Naive thymus-derived CD4-positive, alpha-beta T cell (primary cell): ENCODE measurements at regions of chr13 and their contacts with region 1.

Region 1: DNA sequence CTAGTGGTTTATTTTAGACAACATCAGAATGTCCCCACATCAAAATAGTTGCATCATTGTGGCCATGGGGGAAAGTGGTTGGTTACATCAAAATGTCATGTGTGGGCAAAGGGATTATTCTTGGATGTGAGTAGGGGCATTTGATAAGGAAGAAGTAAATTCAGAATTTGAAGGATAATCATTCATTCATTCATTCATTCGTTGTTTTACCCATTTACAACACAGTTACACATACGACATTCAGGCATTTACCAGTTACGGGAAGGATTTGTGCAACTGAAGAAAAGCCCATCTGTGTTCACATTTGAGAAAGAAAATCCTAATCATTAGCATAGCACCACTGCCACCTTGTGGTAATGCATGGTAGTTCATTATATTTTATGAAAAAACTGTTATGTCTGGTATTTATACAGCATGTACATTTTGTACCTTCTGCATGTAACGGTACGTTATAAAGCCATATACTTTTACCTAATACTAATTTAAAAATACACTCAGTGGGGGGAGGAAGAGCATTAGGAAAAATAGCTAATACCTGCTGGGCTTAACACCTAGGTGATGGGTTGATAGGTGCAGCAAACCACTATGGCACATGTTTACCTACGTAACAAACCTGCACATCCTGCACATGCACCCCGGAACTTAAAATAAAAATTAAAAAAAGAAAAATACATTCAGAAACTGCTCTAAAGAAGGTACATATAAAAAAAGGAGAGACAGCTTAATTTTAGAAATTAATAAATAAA is 62.1 kb downstream of the DGKH start:
- DNase-seq: peak in 7 of 9 donors; percentile 30 to 78 (median 65)
- ATAC-seq: peak; percentile 90
- H3K4me3 ChIP-seq: no peak overlapping the region
- H3K4me3 Mint-ChIP-seq: no peak overlapping the region
- H3K27ac ChIP-seq: no peak overlapping the region
- H3K27ac Mint-ChIP-seq: no peak overlapping the region
- H3K4me1 ChIP-seq: no peaks in the 10 kb centered on the region
- H3K4me1 Mint-ChIP-seq: peaks cover 4 to 9% (median 7%) of the 10 kb centered on the region in 7 donors
- H3K27me3 ChIP-seq: no peaks in the 10 kb centered on the region
- H3K27me3 Mint-ChIP-seq: no peaks in the 10 kb centered on the region

Region 2: DNA sequence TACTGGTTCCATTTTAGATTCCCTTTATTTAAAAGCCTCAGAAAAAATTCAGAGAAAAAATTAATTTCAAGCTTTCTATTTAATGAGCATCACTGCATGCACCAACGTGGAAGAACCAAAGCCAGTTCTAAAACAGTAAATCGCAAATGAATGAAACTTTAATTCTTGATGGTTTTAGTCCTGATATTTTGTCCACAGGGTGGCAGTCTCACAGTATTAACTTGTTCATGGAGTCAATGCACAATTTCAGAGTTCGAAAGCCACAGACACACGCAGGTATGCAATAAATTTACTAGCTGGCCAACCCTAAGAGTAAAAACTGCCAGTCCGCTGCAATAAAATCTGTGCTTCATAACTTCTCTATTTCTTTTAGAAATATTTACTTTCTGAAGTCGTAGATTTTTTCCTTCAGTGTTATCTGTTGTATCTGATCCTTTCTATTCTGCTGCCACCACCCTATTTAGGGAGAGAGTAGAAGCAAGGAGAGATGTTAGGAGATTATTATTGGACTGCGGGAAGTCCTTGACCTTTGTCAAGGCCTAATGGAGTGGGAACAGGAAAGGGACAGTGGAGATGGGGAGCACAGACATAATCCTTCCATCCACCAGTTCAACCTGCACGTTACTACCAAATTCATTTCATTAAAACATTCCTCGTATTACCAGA is 1056.2 kb before region 1 on chr13:
- CTCF ChIA-PET with region 1: no interaction called
- POLR2A ChIA-PET with region 1: no interaction called
- intact Hi-C with region 1: loop called in 1 of 2 experiments (anchors 1 kb)
- DNase-seq: peak in 7 of 9 donors; percentile 42 to 70 (median 56)
- ATAC-seq: peak; percentile 59
- H3K4me3 ChIP-seq: no peak overlapping the region
- H3K4me3 Mint-ChIP-seq: peak overlapping the region in 7 of 10 donors; percentile 14 to 68 (median 48)
- H3K27ac ChIP-seq: peak overlapping the region; percentile 5
- H3K27ac Mint-ChIP-seq: peak overlapping the region in 7 of 9 donors; percentile 2 to 73 (median 59)
- H3K4me1 ChIP-seq: peaks cover 0 to 12% of the 10 kb centered on the region in 2 donors
- H3K4me1 Mint-ChIP-seq: peaks cover 40 to 64% (median 54%) of the 10 kb centered on the region in 7 donors
- H3K27me3 ChIP-seq: no peaks in the 10 kb centered on the region
- H3K27me3 Mint-ChIP-seq: no peaks in the 10 kb centered on the region

Region 3: DNA sequence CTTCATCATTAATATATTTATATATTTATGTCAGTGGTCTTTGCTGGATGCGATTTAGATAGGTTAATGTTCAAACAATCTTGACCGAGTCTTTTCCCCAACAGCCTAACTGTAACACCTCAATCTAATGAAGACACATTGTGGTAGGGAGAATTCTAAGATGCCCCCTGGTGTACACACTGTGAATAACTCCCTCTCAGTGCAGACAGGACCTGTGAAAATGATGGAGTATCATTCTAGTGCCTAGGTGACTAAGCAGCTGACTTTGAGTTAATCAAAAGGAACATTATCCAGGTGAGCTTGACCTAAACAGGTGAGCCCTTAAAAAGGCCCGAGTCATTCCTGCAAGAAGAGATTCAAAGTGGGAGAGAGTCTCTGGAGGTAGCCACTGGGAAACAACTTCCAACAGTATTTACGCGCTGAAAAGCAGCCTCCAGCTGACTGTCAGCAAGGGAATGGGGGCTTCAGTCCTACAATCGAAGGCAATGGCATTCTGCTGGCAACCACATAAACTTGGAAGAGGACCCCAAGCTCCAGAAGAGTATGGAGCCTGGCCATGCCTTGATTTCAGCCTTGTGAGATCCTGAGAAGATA is 888.2 kb before region 1 on chr13:
- CTCF ChIA-PET with region 1: no interaction called
- POLR2A ChIA-PET with region 1: no interaction called
- intact Hi-C with region 1: loop called in 1 of 2 experiments (anchors 1 kb)
- DNase-seq: peak in 8 of 9 donors; percentile 32 to 61 (median 53)
- ATAC-seq: peak; percentile 94
- H3K4me3 ChIP-seq: no peak overlapping the region
- H3K4me3 Mint-ChIP-seq: no peak overlapping the region
- H3K27ac ChIP-seq: no peak overlapping the region
- H3K27ac Mint-ChIP-seq: no peak overlapping the region
- H3K4me1 ChIP-seq: no peaks in the 10 kb centered on the region
- H3K4me1 Mint-ChIP-seq: peaks cover 0 to 4% (median 0%) of the 10 kb centered on the region in 7 donors
- H3K27me3 ChIP-seq: no peaks in the 10 kb centered on the region
- H3K27me3 Mint-ChIP-seq: no peaks in the 10 kb centered on the region

Region 4: DNA sequence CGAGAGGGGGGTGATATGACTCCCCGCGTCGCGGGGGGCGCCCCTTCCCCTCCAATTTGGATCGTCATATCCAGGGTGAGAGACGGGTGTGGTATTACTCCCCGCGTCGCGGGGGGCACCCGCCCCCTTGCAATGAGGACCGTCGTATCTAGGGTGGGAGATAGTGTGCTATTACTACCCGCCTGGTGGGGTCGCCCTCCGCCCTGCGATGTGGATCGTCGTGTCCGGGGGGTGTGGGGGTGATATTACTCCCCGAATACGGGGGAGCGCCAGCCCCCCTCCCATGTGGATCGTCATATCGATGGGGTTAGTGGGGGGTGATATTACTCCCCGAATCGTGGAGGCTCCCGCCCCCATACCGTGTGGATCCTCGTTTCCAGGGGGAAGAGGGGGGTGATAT is 682.4 kb before region 1 on chr13:
- CTCF ChIA-PET with region 1: no interaction called
- POLR2A ChIA-PET with region 1: no interaction called
- intact Hi-C with region 1: loop called in 1 of 2 experiments (anchors 1 kb)
- DNase-seq: peak; percentile 14 to 55 (median 38)
- ATAC-seq: peak; percentile 93
- H3K4me3 ChIP-seq: no peak overlapping the region
- H3K4me3 Mint-ChIP-seq: peak overlapping the region; percentile 13 to 86 (median 62)
- H3K27ac ChIP-seq: no peak overlapping the region
- H3K27ac Mint-ChIP-seq: peak overlapping the region in 2 of 9 donors; percentile 64 to 84
- H3K4me1 ChIP-seq: peaks cover 0 to 6% of the 10 kb centered on the region in 2 donors
- H3K4me1 Mint-ChIP-seq: peaks cover 4 to 15% (median 11%) of the 10 kb centered on the region in 7 donors
- H3K27me3 ChIP-seq: no peaks in the 10 kb centered on the region
- H3K27me3 Mint-ChIP-seq: peaks cover 0 to 7% (median 6%) of the 10 kb centered on the region in 5 donors

Region 5: DNA sequence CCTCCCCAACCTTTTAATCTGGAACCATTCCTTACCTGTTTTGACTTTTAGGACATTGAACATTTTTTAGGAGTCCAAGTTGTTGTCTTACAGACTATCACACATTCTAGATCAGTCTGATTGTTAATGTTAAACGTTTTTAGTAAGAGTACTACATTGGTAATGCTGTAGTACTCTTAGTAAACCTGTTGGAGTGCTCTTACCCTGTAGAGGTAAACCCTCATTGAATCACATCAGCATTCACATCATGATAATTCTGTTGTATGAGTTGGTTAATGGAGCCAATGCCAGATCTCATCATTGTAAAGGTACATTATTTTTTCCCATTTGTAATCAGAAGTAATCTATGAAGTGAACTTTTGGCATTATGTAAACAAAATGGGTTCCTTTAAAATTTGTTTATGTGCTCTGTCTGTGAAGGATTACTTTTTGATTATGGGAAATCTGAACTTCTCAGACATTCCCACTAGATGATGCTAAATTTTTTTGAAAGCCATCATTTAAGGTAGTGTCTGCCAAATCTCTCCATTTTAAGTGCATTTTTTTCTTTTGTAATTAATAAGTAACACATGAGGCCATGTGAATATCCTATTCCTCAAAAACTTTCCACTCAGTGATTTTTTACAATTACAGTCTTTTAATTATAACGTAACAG is 204.9 kb before region 1 on chr13:
- CTCF ChIA-PET with region 1: interaction called, 6 read pairs
- POLR2A ChIA-PET with region 1: no interaction called
- intact Hi-C with region 1: loop called (anchors 1 kb)
- DNase-seq: peak in 6 of 9 donors; percentile 6 to 45 (median 26)
- ATAC-seq: peak; percentile 92
- H3K4me3 ChIP-seq: no peak overlapping the region
- H3K4me3 Mint-ChIP-seq: no peak overlapping the region
- H3K27ac ChIP-seq: no peak overlapping the region
- H3K27ac Mint-ChIP-seq: no peak overlapping the region
- H3K4me1 ChIP-seq: no peaks in the 10 kb centered on the region
- H3K4me1 Mint-ChIP-seq: peaks cover 0 to 12% (median 3%) of the 10 kb centered on the region in 7 donors
- H3K27me3 ChIP-seq: no peaks in the 10 kb centered on the region
- H3K27me3 Mint-ChIP-seq: no peaks in the 10 kb centered on the region

Region 6: DNA sequence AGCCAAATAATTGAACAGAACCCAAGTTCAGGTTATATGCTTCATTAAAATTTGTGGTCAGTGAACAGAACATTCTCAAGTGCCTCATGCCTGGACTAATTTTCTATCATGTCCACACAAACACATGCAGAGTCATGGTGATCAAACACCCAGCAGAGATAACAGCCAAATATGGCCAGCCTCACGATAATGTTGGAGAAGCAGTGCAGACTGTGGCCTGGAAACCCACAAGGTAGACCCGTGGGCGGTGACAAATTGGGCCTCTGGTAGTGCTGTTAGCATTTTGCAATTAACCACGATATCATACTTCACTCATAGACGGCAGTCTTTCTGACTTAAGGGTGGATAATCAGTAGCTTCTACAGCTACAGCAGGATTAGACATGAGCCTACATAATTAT is 114.6 kb before region 1 on chr13:
- CTCF ChIA-PET with region 1: no interaction called
- POLR2A ChIA-PET with region 1: no interaction called
- intact Hi-C with region 1: no loop called
- DNase-seq: no peak
- ATAC-seq: peak; percentile 70
- H3K4me3 ChIP-seq: no peak overlapping the region
- H3K4me3 Mint-ChIP-seq: no peak overlapping the region
- H3K27ac ChIP-seq: no peak overlapping the region
- H3K27ac Mint-ChIP-seq: no peak overlapping the region
- H3K4me1 ChIP-seq: no peaks in the 10 kb centered on the region
- H3K4me1 Mint-ChIP-seq: no peaks in the 10 kb centered on the region
- H3K27me3 ChIP-seq: no peaks in the 10 kb centered on the region
- H3K27me3 Mint-ChIP-seq: peaks cover 0 to 23% (median 9%) of the 10 kb centered on the region in 5 donors

Region 7: GRCh38 chr13:42048682-42049453 is 61.7 kb before region 1 on chr13:
- CTCF ChIA-PET with region 1: interaction called, 3 read pairs
- POLR2A ChIA-PET with region 1: no interaction called
- intact Hi-C with region 1: loop called (anchors 2 kb)
- DNase-seq: peak; percentile 20 to 81 (median 43)
- ATAC-seq: peak; percentile 81
- H3K4me3 ChIP-seq: peak overlapping the region; percentile 84
- H3K4me3 Mint-ChIP-seq: peak overlapping the region; percentile 83 to 96 (median 92)
- H3K27ac ChIP-seq: peak overlapping the region; percentile 67
- H3K27ac Mint-ChIP-seq: peak overlapping the region in 2 of 9 donors; percentile 74 to 78
- H3K4me1 ChIP-seq: peaks cover 5 to 9% of the 10 kb centered on the region in 2 donors
- H3K4me1 Mint-ChIP-seq: peaks cover 6 to 38% (median 15%) of the 10 kb centered on the region in 7 donors
- H3K27me3 ChIP-seq: no peaks in the 10 kb centered on the region
- H3K27me3 Mint-ChIP-seq: peaks cover 0 to 15% (median 0%) of the 10 kb centered on the region in 5 donors

Region 8: DNA sequence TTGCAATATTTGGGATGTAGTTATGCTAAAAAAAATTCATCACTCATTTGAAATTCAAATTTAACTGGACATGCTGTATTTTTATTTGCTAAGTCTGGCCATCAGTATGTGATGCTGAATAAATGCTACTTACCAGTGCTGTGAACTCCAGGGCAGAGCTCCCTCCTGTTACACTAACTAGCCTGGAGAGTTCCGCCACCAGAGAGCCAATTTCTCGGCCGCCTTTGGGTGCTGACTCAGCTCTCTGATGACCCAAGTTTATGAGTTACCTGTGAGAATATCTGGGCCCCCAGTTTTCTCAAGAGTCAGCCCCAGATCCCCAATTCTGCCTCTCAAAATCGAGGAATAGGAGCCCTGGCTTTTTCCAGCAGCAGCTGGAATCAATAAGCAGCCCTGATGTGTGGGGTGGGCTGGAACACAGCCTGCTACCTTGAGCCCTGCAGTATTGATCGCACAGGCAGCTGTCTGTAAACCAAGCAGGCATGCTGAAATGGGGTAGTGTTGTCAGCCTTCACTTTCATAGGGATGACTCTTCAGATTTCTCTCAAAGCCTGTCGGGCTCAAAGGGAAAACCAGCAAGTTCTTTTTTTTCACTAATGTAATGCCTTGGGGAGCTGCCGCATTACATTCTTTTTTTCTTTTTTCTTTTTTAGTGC is 1026.5 kb after region 1 on chr13:
- CTCF ChIA-PET with region 1: no interaction called
- POLR2A ChIA-PET with region 1: no interaction called
- intact Hi-C with region 1: no loop called
- DNase-seq: no peak
- ATAC-seq: no peak
- H3K4me3 ChIP-seq: no peak overlapping the region
- H3K4me3 Mint-ChIP-seq: no peak overlapping the region
- H3K27ac ChIP-seq: no peak overlapping the region
- H3K27ac Mint-ChIP-seq: no peak overlapping the region
- H3K4me1 ChIP-seq: no peaks in the 10 kb centered on the region
- H3K4me1 Mint-ChIP-seq: no peaks in the 10 kb centered on the region
- H3K27me3 ChIP-seq: no peaks in the 10 kb centered on the region
- H3K27me3 Mint-ChIP-seq: peaks cover 4 to 23% (median 13%) of the 10 kb centered on the region in 5 donors